ENCODE measurements at regions of chr10 and their contacts with region 1.

Region 1: DNA sequence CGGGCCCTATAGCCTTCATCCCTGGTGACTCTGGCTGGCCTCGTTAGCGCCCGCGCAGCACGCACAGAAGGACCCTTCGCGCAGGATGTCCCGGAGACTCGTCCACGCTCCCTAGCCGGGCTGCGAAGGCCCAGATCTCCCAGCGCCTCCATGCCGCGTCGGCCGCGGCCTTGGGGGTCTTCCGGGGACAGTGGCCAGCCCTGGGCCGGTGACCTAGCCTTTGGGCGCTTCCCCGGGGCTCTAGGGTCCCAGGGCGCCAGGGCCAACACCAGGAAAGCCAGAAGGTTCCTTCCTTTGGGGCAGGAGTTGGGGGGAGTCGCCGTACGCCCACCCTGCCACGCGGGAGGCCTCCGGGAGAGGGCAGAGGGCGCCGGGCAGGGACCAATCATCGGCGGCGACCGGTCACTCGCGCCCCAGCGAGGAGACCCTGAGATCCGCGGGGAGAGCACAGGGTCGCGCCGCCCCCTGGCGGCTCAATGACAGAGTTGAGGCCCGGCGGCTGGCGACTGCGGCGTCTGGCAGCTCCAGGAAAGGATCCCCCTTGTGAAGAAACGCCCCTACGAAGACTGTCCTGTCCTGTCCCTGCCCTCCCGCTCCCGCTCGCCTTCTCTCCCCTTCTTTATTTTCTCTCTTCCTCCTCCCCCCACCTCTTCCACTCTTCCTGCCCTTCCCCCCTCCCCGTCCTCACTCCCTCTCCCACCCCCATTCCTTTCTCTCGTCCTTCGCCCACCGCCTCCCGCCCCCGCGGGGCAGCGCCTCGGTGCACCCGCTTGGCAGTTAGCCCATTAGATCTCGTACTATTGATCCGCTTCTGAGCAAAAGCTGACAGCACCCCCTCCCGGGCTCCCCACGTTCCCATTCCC is 62.3 kb upstream of the LBX1 start:
- DNase-seq: peak in 1 of 2 experiments; percentile 86
- H3K4me3 ChIP-seq: peak overlapping the region; percentile 40 to 68 (median 48)
- H3K27ac ChIP-seq: no peak overlapping the region
- H3K4me1 ChIP-seq: peaks cover 15 to 24% (median 17%) of the 10 kb centered on the region in 4 experiments; a peak in 6 of 7 replicates
- H3K27me3 ChIP-seq: peaks cover 47 to 92% (median 82%) of the 10 kb centered on the region in 4 experiments
- CTCF ChIP-seq: peak; percentile 68 to 90 (median 74)
- EP300 ChIP-seq: no peak
- POLR2A ChIP-seq: no peak
- RAD21 ChIP-seq: peak; percentile 67 to 75

Region 2: GRCh38 chr10:101161494-101162299 is 129.9 kb before region 1 on chr10:
- CTCF ChIA-PET with region 1: interaction called, 11 read pairs
- POLR2A ChIA-PET with region 1: no interaction called
- DNase-seq: peak; percentile 77 to 88
- H3K4me3 ChIP-seq: peak overlapping the region in 1 of 4 experiments; percentile 48; a peak in 4 of 8 replicates
- H3K27ac ChIP-seq: no peak overlapping the region
- H3K4me1 ChIP-seq: peaks cover 0 to 7% (median 1%) of the 10 kb centered on the region in 4 experiments; a peak in 1 of 7 replicates
- H3K27me3 ChIP-seq: peaks cover 0 to 13% (median 10%) of the 10 kb centered on the region in 4 experiments; a peak in 5 of 7 replicates
- CTCF ChIP-seq: peak; percentile 96 to 100 (median 97)
- EP300 ChIP-seq: 0 out of 3 replicates have a peak, but pooled peaks of 1 of the 2 experiments have one; percentile 17
- POLR2A ChIP-seq: no peak
- RAD21 ChIP-seq: peak; percentile 94 to 97

Region 3: GRCh38 chr10:101272229-101272868 is 19.2 kb before region 1 on chr10:
- CTCF ChIA-PET with region 1: interaction called, 317 read pairs
- POLR2A ChIA-PET with region 1: no interaction called
- DNase-seq: peak; percentile 65 to 90
- H3K4me3 ChIP-seq: peak overlapping the region in 1 of 4 experiments; percentile 14; a peak in 1 of 8 replicates
- H3K27ac ChIP-seq: no peak overlapping the region
- H3K4me1 ChIP-seq: peaks cover 4 to 8% (median 6%) of the 10 kb centered on the region in 4 experiments; a peak in 5 of 7 replicates
- H3K27me3 ChIP-seq: no peaks in the 10 kb centered on the region; a peak in 3 of 7 replicates
- CTCF ChIP-seq: peak; percentile 80 to 93 (median 82)
- EP300 ChIP-seq: no peak
- POLR2A ChIP-seq: no peak
- RAD21 ChIP-seq: peak; percentile 57 to 65

Region 4: GRCh38 chr10:101441541-101442455 is 150.2 kb after region 1 on chr10:
- CTCF ChIA-PET with region 1: interaction called, 417 read pairs
- POLR2A ChIA-PET with region 1: interaction called, 3 read pairs
- DNase-seq: no peak
- H3K4me3 ChIP-seq: no peak overlapping the region
- H3K27ac ChIP-seq: no peak overlapping the region
- H3K4me1 ChIP-seq: peaks cover 0 to under 1% (median 0%) of the 10 kb centered on the region in 4 experiments; a peak in 1 of 7 replicates
- H3K27me3 ChIP-seq: no peaks in the 10 kb centered on the region
- CTCF ChIP-seq: peak in 2 of 3 experiments; percentile 80 to 83; a peak in 3 of 4 replicates
- EP300 ChIP-seq: no peak
- POLR2A ChIP-seq: no peak
- RAD21 ChIP-seq: peak; percentile 93 to 95

Region 5: DNA sequence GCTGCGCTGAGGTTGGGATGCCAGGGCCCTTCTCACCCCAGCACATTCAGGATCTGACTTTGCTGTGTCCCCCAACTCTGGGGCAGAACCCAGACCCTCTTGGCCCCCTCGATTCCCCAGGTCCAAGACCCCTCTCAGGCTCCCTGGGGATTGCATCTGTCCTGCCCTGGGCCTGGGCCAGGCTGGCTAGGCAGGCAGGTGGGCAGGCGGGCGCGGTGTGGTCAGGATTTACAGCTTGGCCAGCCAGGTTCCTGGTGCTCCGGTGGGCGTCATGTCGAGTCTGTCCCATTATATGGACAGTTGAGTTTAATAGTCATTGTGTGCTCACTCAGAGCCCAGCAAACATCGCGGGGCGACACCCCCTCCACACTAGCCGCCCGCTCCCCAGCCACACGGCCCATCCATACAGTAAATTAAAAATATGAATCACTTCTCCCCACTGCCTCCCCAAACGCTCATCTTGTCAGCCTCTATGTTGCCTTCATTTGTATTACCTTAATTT is 273.0 kb after region 1 on chr10:
- CTCF ChIA-PET with region 1: interaction called, 27 read pairs
- POLR2A ChIA-PET with region 1: no interaction called
- DNase-seq: no peak
- H3K4me3 ChIP-seq: no peak overlapping the region
- H3K27ac ChIP-seq: no peak overlapping the region
- H3K4me1 ChIP-seq: peaks cover 0 to 10% (median 6%) of the 10 kb centered on the region in 4 experiments; a peak in 4 of 7 replicates
- H3K27me3 ChIP-seq: peaks cover 2 to 37% (median 33%) of the 10 kb centered on the region in 4 experiments
- CTCF ChIP-seq: no peak
- EP300 ChIP-seq: no peak
- POLR2A ChIP-seq: no peak
- RAD21 ChIP-seq: no peak